CD4-positive, alpha-beta T cell (primary cell): ENCODE measurements at regions of chr11 and their contacts with region 1.

Region 1: DNA sequence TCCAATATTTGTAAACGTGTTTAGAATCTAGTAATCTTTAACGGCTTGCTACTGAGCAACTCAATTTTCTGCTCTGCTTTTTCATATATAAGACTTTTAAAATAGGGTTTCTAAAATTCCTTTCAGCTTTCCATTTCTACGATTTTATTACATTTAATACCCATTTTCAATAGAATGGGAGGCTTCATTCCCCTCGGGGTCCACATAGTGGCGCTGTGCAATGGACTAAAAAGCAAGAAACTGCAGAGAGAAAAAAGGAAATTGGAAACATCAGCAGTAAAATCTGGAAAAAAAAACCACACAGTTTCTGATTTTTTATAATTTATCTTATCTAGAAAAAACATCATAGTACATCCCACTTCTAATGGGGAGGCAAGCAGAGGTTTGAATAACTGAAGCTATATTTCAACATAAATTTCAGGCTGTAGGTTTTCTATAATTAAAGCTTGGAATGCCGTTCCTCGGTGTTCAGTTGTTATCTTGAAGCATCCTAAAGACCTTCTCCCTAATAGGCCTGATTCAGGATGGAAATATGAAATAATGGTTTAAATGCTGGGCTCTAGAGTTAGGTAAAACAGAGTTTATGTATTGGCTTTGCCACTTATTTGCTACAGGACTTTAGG is 18.7 kb upstream of the JHY start:
- DNase-seq: peak in 12 of 14 experiments; percentile 12 to 66 (median 31)
- ATAC-seq: peak; percentile 49
- H3K4me3 ChIP-seq: no peak overlapping the region
- H3K4me3 Mint-ChIP-seq: no peak overlapping the region
- H3K27ac ChIP-seq: no peak overlapping the region
- H3K27ac Mint-ChIP-seq: no peak overlapping the region
- H3K4me1 ChIP-seq: no peaks in the 10 kb centered on the region
- H3K4me1 Mint-ChIP-seq: no peaks in the 10 kb centered on the region
- H3K27me3 ChIP-seq: no peaks in the 10 kb centered on the region
- H3K27me3 Mint-ChIP-seq: no peaks in the 10 kb centered on the region
- CTCF ChIP-seq: peak; percentile 93

Region 2: DNA sequence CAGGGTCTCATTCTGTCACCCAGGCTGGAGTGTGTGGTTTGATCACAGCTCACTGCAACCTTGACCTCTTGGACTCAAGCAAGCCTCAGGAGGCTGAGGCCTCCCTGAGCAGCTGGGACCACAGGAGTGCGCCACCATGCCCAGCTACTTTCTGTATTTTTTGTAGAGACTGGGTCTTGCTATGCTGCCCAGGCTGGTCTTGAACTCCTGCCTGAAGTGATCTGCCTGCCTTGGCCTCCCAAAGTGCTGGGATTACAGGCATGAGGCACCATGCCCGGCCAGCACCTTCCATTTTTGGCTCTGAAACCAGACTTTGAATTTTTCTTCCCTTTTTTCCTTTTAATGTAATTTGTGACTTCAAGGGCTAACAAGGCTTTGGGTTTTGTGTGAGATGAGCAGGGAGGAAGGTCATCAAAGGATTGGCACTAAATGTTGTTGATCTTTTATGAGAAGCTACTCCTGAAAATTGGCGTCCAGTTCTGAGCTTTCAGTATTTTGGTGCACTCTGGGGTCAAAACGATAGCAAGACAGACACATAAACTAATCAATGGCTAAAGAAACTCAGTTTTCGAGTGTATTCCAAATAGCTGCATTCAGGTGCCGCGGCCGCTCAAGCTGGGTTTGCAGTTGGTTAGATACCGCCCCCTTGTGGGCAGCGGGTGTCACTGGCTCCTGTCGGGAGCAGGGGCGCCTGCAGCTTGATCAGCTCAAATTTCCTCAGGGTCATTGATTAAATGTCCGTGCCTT is 383.1 kb after region 1 on chr11:
- CTCF ChIA-PET with region 1: interaction called, 3 read pairs
- POLR2A ChIA-PET with region 1: no interaction called
- intact Hi-C with region 1: loop called (anchors 5 kb)
- DNase-seq: peak; percentile 70 to 89 (median 79)
- ATAC-seq: peak; percentile 92
- H3K4me3 ChIP-seq: no peak overlapping the region
- H3K4me3 Mint-ChIP-seq: no peak overlapping the region
- H3K27ac ChIP-seq: no peak overlapping the region
- H3K27ac Mint-ChIP-seq: no peak overlapping the region
- H3K4me1 ChIP-seq: peaks cover 7% of the 10 kb centered on the region
- H3K4me1 Mint-ChIP-seq: no peaks in the 10 kb centered on the region
- H3K27me3 ChIP-seq: no peaks in the 10 kb centered on the region
- H3K27me3 Mint-ChIP-seq: no peaks in the 10 kb centered on the region
- CTCF ChIP-seq: peak; percentile 95